Activated CD4-positive, alpha-beta T cell treated with anti-CD3 and anti-CD28 coated beads for 36 hours (primary cell): ENCODE measurements at regions of chr15 and their contacts with region 1.

Region 1: DNA sequence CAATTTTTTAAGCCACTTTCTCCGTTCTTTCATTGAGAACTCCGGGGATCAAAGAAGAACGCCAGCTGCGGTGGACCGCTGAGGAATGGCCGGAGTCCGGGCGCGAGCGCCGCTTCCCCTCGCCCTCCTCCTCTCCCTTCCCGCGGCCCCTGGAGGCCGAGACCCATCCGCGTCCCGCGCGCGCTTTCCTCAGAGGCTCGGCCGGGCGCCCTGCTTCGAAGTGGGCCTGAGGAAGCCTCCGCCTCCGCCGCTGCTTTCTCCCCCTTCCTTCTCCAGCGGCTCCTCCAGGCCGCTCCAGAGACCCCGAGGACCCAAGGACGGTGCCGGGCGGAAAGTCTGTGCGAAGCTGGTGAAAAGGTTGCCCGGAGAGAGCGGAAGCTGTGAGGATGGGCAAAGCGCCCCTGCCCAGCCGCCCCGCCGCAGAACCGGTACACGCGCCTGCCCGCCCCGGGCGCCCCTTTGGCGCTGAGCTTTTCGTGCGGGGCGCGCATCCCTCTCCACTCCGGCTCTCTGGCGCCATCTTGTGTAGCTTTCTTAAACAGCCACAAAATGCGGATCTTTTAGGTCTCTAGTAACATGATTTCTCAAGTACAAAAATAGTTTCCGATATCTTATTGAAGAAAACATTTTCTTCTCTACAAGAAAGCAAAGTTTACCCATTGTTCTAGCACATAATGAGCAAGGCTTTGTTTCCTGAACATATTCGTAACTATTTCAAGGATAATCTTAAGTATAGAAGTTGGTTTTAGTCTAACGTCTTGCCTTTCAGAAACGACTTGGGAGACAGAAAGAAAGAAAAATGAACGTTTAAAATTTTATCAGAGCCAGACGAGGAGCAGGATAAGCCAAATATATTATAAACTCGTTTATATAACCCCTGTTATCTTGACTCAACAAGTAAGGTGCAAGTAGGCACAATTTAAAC is 59.2 kb upstream of the FAM174B start:
- DNase-seq: peak; percentile 85
- ATAC-seq: peak; percentile 86
- H3K4me3 Mint-ChIP-seq: peak overlapping the region; percentile 53
- H3K27ac Mint-ChIP-seq: no peak overlapping the region
- H3K4me1 Mint-ChIP-seq: peaks cover 5% of the 10 kb centered on the region
- H3K27me3 Mint-ChIP-seq: peaks cover 15% of the 10 kb centered on the region

Region 2: GRCh38 chr15:92097474-92098178 is 617.1 kb before region 1 on chr15:
- CTCF ChIA-PET with region 1: interaction called, 4 read pairs
- POLR2A ChIA-PET with region 1: no interaction called
- intact Hi-C with region 1: loop called (anchors 1 to 2 kb)
- DNase-seq: peak; percentile 70
- ATAC-seq: peak; percentile 82
- H3K4me3 Mint-ChIP-seq: no peak overlapping the region
- H3K27ac Mint-ChIP-seq: no peak overlapping the region
- H3K4me1 Mint-ChIP-seq: peaks cover 40% of the 10 kb centered on the region
- H3K27me3 Mint-ChIP-seq: no peaks in the 10 kb centered on the region

Region 3: GRCh38 chr15:92277776-92278175 is 437.0 kb before region 1 on chr15:
- CTCF ChIA-PET with region 1: no interaction called
- POLR2A ChIA-PET with region 1: no interaction called
- intact Hi-C with region 1: loop called (anchors 5 kb)
- DNase-seq: peak; percentile 35
- ATAC-seq: peak; percentile 47
- H3K4me3 Mint-ChIP-seq: no peak overlapping the region
- H3K27ac Mint-ChIP-seq: no peak overlapping the region
- H3K4me1 Mint-ChIP-seq: no peaks in the 10 kb centered on the region
- H3K27me3 Mint-ChIP-seq: peaks cover 13% of the 10 kb centered on the region

Region 4: DNA sequence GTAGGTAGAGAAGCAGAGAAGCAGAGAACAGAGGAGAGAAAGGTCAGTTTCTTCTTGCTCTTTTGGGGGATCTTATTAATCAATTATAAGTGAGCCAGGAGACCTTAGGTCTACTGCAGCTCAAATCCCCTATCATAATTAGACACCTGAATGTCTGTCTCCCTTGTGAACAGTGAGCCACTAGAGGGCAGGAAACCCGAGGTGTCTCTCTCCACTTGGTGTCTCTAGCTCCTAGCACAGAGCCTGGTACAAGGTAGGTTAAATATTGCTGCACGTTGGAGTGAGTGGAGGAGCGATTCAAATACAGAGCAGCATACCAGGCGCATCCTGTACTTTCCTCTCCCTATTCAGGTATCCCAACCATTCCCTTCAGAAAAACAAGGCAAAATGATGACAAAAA is 323.1 kb before region 1 on chr15:
- CTCF ChIA-PET with region 1: interaction called, 5 read pairs
- POLR2A ChIA-PET with region 1: no interaction called
- intact Hi-C with region 1: loop called (anchors 1 to 10 kb)
- DNase-seq: peak; percentile 52
- ATAC-seq: no peak
- H3K4me3 Mint-ChIP-seq: no peak overlapping the region
- H3K27ac Mint-ChIP-seq: no peak overlapping the region
- H3K4me1 Mint-ChIP-seq: peaks cover 8% of the 10 kb centered on the region
- H3K27me3 Mint-ChIP-seq: peaks cover 64% of the 10 kb centered on the region

Region 5: DNA sequence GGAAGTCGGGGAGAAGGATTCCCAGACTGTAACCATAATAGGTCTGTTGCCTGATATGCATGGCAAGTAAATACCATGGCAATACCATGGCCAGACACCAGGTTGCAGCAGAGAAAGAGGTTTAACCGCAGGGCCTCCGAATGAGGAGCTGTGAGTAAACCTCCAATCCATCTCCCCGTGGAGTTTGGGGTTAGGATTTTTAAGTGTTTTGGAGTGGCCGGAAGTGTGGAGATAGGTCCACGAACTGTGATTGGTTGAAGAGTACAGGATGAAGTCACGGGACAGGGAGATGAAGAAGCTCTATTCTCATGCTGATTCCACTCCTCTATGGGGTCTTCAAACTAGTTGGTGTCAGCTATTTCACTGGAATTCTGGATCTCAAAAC is 193.1 kb before region 1 on chr15:
- CTCF ChIA-PET with region 1: interaction called, 57 read pairs
- POLR2A ChIA-PET with region 1: no interaction called
- intact Hi-C with region 1: loop called (anchors 1 kb)
- DNase-seq: peak; percentile 75
- ATAC-seq: peak; percentile 83
- H3K4me3 Mint-ChIP-seq: no peak overlapping the region
- H3K27ac Mint-ChIP-seq: no peak overlapping the region
- H3K4me1 Mint-ChIP-seq: peaks cover 8% of the 10 kb centered on the region
- H3K27me3 Mint-ChIP-seq: no peaks in the 10 kb centered on the region

Region 6: GRCh38 chr15:92527197-92527596 is 187.5 kb before region 1 on chr15:
- CTCF ChIA-PET with region 1: interaction called, 57 read pairs
- POLR2A ChIA-PET with region 1: no interaction called
- intact Hi-C with region 1: no loop called
- DNase-seq: no peak
- ATAC-seq: no peak
- H3K4me3 Mint-ChIP-seq: no peak overlapping the region
- H3K27ac Mint-ChIP-seq: no peak overlapping the region
- H3K4me1 Mint-ChIP-seq: peaks cover 2% of the 10 kb centered on the region
- H3K27me3 Mint-ChIP-seq: peaks cover 15% of the 10 kb centered on the region

Region 7: DNA sequence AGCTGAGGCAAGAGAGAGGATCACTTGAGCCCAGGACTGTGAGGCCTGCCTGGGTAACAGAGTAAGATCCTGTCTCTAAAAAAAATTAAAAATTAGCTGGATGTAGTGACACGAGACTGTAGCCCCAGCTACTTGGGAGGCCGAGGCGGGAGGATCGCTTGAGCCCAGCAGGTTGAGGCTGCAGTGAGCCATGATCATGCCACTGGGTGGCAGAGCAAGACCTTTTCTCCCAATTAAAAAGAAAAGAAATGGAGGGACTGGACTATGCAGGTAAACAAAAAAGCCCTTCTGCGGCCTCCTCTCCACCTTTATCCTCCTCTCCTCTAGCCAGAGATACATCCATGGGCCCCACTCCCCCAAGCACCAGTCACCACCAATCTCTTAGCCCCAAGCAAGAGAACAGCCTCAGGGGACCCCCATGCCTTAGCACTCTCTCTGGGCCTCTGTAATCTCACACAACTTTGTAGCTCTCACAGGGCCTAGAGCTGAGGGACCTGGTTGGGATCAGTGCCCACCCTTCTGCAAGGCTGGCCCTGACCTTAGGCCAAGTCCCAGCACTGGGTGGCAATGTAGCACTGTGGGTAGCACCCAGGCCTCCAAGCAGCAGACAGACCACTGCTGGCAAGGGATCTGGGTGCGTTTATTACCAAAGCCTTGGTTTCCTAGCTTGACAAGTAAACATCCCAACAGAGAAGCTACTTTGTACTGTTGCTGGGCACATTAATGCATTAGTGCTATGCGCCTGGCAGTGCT is 102.6 kb before region 1 on chr15:
- CTCF ChIA-PET with region 1: interaction called, 5 read pairs
- POLR2A ChIA-PET with region 1: no interaction called
- intact Hi-C with region 1: loop called (anchors 1 kb)
- DNase-seq: peak; percentile 31
- ATAC-seq: peak; percentile 33
- H3K4me3 Mint-ChIP-seq: no peak overlapping the region
- H3K27ac Mint-ChIP-seq: no peak overlapping the region
- H3K4me1 Mint-ChIP-seq: no peaks in the 10 kb centered on the region
- H3K27me3 Mint-ChIP-seq: no peaks in the 10 kb centered on the region

Region 8: DNA sequence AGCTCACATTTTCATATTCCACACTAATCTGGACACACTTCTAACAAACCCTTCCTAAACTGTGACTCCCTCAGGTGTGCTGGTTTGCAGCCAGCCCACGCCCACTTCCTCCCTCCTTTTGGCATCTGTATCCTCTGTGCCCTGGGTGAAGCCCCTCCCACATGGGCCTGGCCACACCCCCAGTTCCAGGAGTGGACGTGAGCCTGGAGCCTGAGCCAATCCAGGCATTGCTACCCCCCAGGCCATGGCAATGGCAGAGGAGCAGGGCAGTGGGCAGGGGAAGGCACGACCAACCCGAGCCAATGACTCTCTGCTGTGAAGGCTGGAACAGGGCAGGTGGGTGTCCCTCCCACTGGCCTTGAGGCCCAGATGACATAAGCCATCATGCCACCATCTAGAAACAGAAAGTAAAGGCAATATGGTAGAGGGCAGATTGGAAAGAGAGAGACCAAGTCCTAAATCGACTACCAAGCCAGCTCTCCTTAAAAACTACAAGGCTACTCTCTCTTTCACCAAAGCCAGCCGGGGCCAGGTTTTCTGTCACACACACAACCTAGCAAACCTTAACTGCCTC is 77.7 kb before region 1 on chr15:
- CTCF ChIA-PET with region 1: no interaction called
- POLR2A ChIA-PET with region 1: no interaction called
- intact Hi-C with region 1: no loop called
- DNase-seq: no peak
- ATAC-seq: peak; percentile 64
- H3K4me3 Mint-ChIP-seq: no peak overlapping the region
- H3K27ac Mint-ChIP-seq: no peak overlapping the region
- H3K4me1 Mint-ChIP-seq: peaks cover 11% of the 10 kb centered on the region
- H3K27me3 Mint-ChIP-seq: peaks cover 7% of the 10 kb centered on the region

Region 9: GRCh38 chr15:92808978-92809879 is 94.5 kb after region 1 on chr15:
- CTCF ChIA-PET with region 1: no interaction called
- POLR2A ChIA-PET with region 1: no interaction called
- intact Hi-C with region 1: no loop called
- DNase-seq: peak; percentile 99
- ATAC-seq: peak; percentile 82
- H3K4me3 Mint-ChIP-seq: peak overlapping the region; percentile 88
- H3K27ac Mint-ChIP-seq: peak overlapping the region; percentile 99
- H3K4me1 Mint-ChIP-seq: peaks cover 43% of the 10 kb centered on the region
- H3K27me3 Mint-ChIP-seq: no peaks in the 10 kb centered on the region

Region 10: DNA sequence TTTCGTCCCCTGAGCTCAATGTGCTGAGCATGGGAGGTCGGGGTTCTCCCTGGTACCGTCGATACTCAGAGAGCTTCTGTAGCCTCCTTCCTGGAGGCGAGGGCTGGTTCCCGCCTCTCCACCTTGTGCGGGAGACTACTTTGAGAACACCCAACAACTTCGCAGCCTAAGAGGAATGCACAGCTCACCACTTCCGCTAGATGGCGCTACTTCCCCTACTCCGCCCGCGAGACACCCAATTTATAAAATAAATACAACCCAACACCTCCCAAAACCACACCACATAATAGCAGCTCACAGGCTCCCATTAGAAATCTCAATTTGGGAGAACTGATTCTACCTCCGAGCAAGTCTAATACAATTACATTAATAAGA is 373.1 kb after region 1 on chr15:
- CTCF ChIA-PET with region 1: no interaction called
- POLR2A ChIA-PET with region 1: no interaction called
- intact Hi-C with region 1: no loop called
- DNase-seq: peak; percentile 83
- ATAC-seq: peak; percentile 78
- H3K4me3 Mint-ChIP-seq: peak overlapping the region; percentile 64
- H3K27ac Mint-ChIP-seq: no peak overlapping the region
- H3K4me1 Mint-ChIP-seq: peaks cover 13% of the 10 kb centered on the region
- H3K27me3 Mint-ChIP-seq: peaks cover 51% of the 10 kb centered on the region